ENCODE measurements at regions of chr21 and their contacts with region 1.

Region 1: GRCh38 chr21:34243562-34243961 is 120.2 kb upstream of the KCNE2 start:
- DNase-seq: peak in 1 of 2 experiments; percentile 3
- H3K4me3 ChIP-seq: no peak overlapping the region
- H3K27ac ChIP-seq: no peak overlapping the region
- H3K4me1 ChIP-seq: no peaks in the 10 kb centered on the region
- H3K27me3 ChIP-seq: peaks cover 18% of the 10 kb centered on the region
- CTCF ChIP-seq: peak; percentile 39; the same call in 1 of the 2 replicates

Region 2: GRCh38 chr21:34135330-34135729 is 108.2 kb before region 1 on chr21:
- CTCF ChIA-PET with region 1: no interaction called
- POLR2A ChIA-PET with region 1: interaction called, 16 read pairs
- intact Hi-C with region 1: no loop called
- DNase-seq: no peak
- H3K4me3 ChIP-seq: no peak overlapping the region
- H3K27ac ChIP-seq: no peak overlapping the region
- H3K4me1 ChIP-seq: no peaks in the 10 kb centered on the region
- H3K27me3 ChIP-seq: no peaks in the 10 kb centered on the region
- CTCF ChIP-seq: no peak

Measured in PC-9 (cell line).